Cardiac septum (tissue), 1 donor: ENCODE measurements at regions of chr10 and their contacts with region 1.

Region 1: GRCh38 chr10:70880077-70880534 is 8.3 kb downstream of the PCBD1 start:
- DNase-seq: no peak

Region 2: GRCh38 chr10:70549962-70550458 is 330.1 kb before region 1 on chr10:
- intact Hi-C with region 1: loop called (anchors 5 kb)
- DNase-seq: no peak

Region 3: GRCh38 chr10:70672165-70673042 is 207.7 kb before region 1 on chr10 and contains the start of gene ADAMTS14:
- intact Hi-C with region 1: loop called (anchors 10 kb)
- DNase-seq: no peak
- total RNA-seq, gene ADAMTS14: 0.81 TPM

Region 4: GRCh38 chr10:70815504-70816219 is 64.4 kb before region 1 on chr10 and contains the start of gene SGPL1:
- intact Hi-C with region 1: loop called (anchors 1 kb)
- DNase-seq: peak; percentile 93
- total RNA-seq, gene SGPL1: 17.3 TPM